Right ventricle myocardium superior (tissue), 1 donor: ENCODE measurements at regions of chr9 and their contacts with region 1.

Region 1: GRCh38 chr9:87684627-87685219 is 41.2 kb upstream of the CTSL start:
- DNase-seq: peak; percentile 63
- ATAC-seq: peak; percentile 71

Region 2: DNA sequence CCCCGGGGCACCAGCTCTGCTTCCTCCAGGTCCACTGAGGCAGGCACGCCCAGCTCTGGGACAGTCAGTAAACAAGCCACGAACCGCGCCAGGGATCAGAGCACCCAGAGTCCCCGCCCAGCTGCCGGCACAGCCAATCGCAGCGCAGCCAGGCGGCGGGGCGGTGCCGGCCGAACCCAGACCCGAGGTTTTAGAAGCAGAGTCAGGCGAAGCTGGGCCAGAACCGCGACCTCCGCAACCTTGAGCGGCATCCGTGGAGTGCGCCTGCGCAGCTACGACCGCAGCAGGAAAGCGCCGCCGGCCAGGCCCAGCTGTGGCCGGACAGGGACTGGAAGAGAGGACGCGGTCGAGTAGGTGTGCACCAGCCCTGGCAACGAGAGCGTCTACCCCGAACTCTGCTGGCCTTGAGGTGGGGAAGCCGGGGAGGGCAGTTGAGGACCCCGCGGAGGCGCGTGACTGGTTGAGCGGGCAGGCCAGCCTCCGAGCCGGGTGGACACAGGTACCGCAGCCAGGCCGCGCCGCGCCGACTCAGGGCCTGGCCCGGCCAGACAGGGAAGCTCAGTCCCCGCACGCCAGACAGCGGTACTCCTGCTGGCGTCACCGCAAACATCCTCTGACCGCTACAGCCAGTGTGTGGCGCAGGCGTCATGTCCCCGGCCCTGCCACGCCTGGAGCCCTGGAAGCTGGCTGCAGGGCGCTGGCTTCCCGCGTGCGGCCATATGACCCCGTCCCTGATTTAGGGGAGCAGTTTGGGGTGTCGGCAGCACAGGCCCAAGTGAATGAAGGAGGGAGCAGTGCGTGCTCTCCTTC is 41.4 kb after region 1 on chr9 and contains the start of gene CTSL:
- intact Hi-C with region 1: loop called (anchors 2 kb)
- DNase-seq: peak; percentile 97
- ATAC-seq: peak; percentile 99
- total RNA-seq, gene CTSL: 142 TPM

Region 3: GRCh38 chr9:87812375-87813118 is 127.8 kb after region 1 on chr9:
- intact Hi-C with region 1: loop called (anchors 2 kb)
- DNase-seq: no peak
- ATAC-seq: peak; percentile 58

Region 4: GRCh38 chr9:88041447-88041846 is 356.7 kb after region 1 on chr9:
- intact Hi-C with region 1: loop called (anchors 10 kb)
- DNase-seq: no peak
- ATAC-seq: no peak